Activated CD4-positive, alpha-beta memory T cell treated with anti-CD3 and anti-CD28 coated beads for 36 hours (primary cell): ENCODE measurements at regions of chrX and their contacts with region 1.

Region 1: GRCh38 chrX:72620550-72621145 is 48.0 kb upstream of the HDAC8 start:
- DNase-seq: peak; percentile 72
- H3K4me3 Mint-ChIP-seq: peak overlapping the region; percentile 54
- H3K27ac Mint-ChIP-seq: peak overlapping the region; percentile 91
- H3K4me1 Mint-ChIP-seq: peaks cover 23% of the 10 kb centered on the region
- H3K27me3 Mint-ChIP-seq: peaks cover 8% of the 10 kb centered on the region

Region 2: GRCh38 chrX:72269671-72270251 is 350.9 kb before region 1 on chrX:
- CTCF ChIA-PET with region 1: no interaction called
- POLR2A ChIA-PET with region 1: no interaction called
- intact Hi-C with region 1: loop called (anchors 10 kb)
- DNase-seq: peak; percentile 49
- H3K4me3 Mint-ChIP-seq: no peak overlapping the region
- H3K27ac Mint-ChIP-seq: peak overlapping the region; percentile 83
- H3K4me1 Mint-ChIP-seq: peaks cover 42% of the 10 kb centered on the region
- H3K27me3 Mint-ChIP-seq: no peaks in the 10 kb centered on the region

Region 3: DNA sequence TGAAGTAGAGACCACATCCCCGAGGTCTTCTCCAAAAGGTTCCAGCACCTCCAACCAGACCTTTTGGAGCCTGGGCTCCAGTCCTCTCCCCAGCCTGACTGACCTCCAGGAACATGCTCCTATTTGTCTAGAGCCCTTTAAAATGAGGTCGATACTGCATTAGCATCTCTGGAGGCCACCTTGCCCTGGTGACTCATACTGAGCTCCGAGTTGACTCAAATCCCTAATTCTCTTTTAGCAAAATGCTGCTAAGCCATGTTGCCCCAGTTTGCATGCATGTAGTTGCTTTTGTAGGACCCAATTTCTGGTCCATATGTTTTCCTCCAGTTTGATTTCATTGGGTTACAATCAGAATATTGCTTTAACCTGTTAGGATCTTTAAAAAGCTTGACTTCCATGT is 271.5 kb before region 1 on chrX:
- CTCF ChIA-PET with region 1: no interaction called
- POLR2A ChIA-PET with region 1: no interaction called
- intact Hi-C with region 1: loop called (anchors 2 kb)
- DNase-seq: peak; percentile 56
- H3K4me3 Mint-ChIP-seq: no peak overlapping the region
- H3K27ac Mint-ChIP-seq: peak overlapping the region; percentile 75
- H3K4me1 Mint-ChIP-seq: peaks cover 21% of the 10 kb centered on the region
- H3K27me3 Mint-ChIP-seq: no peaks in the 10 kb centered on the region

Region 4: DNA sequence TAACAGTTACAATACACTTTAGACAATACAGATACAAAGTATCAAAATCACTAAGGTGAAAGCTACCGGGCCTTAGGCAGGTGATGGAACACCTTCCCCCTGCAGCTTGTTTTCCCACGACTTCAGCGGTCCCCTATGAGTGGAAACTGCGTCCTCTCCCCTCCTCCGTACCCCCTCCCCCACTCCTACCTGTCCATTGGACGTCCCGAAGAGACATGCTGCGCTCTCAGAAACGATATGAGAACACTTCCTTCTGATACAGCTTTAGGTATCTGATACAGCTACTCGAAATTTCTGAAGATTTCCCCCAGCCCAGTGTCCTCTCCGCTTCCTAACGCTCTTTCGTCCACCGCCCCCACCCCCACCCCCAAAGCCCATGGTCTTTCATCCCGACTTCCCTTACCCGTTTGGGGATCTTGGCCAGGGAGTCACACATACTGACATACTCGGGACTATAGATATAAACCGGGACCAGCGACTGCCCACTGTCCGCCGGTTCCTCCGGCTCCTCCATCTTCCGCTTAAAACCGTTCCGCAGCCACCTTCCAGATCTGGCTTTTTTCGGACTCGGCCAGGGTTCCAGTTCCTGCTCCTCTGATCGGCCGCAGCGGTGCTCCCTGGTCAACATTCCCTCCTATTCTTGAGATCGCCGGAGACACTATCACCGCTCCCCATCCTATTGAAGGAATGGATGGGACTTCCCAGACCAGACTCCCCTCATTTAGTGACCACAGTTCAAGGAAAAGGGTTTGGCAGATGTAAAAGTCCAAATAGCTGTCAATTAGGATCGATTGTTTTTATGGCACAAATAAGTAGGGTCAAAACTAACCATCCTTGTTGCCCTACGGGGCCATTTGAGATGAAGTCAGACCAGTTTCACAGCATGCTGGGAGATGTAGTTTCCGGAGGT is 48.1 kb before region 1 on chrX and contains the start of gene HDAC8:
- CTCF ChIA-PET with region 1: no interaction called
- POLR2A ChIA-PET with region 1: no interaction called
- intact Hi-C with region 1: loop called (anchors 2 kb)
- DNase-seq: peak; percentile 52
- H3K4me3 Mint-ChIP-seq: peak within 1 kb of the TSS; percentile 89
- H3K27ac Mint-ChIP-seq: peak within 1 kb of the TSS; percentile 84
- H3K4me1 Mint-ChIP-seq: peaks cover 7% of the 10 kb centered on the region
- H3K27me3 Mint-ChIP-seq: no peaks in the 10 kb centered on the region
- total RNA-seq, gene HDAC8: 17.9 to 19.7 TPM

Region 5: DNA sequence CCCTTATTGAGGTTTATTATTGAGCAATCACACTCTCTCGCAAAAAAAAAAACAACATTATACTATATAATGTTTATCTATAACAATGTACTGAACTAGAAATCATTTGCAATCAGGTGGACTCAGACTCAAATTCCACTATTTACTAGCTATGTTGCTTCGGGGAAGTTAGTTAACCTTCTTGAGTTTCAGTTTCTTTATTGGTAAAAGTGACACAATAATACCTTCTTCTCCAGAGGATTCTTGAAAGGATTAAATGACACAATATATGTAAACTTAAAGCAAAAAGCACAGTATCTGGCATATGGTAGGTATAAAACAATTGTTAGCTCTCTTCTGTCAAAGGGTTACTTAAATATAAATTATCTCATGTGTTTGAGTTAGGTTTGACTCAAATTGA is 16.5 kb before region 1 on chrX:
- CTCF ChIA-PET with region 1: interaction called, 7 read pairs
- POLR2A ChIA-PET with region 1: interaction called, 4 read pairs
- intact Hi-C with region 1: loop called (anchors 1 kb)
- DNase-seq: no peak
- H3K4me3 Mint-ChIP-seq: no peak overlapping the region
- H3K27ac Mint-ChIP-seq: no peak overlapping the region
- H3K4me1 Mint-ChIP-seq: peaks cover 13% of the 10 kb centered on the region
- H3K27me3 Mint-ChIP-seq: no peaks in the 10 kb centered on the region

Region 6: DNA sequence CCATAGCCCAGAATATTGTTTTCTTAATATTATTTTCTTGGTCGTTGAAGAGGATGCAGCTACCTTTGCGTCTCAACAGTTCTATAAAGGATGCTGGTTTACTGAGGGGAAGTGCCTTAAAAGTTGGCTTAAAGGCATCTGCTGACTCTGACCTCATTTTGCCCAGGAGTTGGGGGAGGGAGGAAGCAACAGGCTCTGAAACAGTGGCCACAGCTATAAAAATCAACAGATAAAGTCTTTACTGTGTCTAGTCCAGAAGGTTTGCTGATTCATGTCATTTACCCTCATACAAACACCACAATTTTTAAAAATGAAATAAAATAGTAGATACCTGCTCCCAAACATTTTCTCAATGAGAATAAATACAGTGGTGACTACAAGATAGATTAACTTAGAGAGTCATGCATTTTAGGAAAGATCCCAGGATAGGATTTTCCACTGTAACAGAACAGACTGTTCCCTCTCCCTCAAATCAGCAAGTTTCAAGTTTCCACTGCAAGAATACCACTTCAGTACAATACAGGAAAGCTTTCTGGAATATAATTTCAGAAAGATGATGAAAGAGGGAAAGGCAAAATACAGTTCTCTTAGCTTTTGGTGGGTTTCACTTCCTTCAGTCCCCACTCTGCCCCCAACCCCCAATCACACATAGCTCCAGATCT is 91.6 kb after region 1 on chrX:
- CTCF ChIA-PET with region 1: no interaction called
- POLR2A ChIA-PET with region 1: no interaction called
- intact Hi-C with region 1: loop called (anchors 2 kb)
- DNase-seq: no peak
- H3K4me3 Mint-ChIP-seq: no peak overlapping the region
- H3K27ac Mint-ChIP-seq: no peak overlapping the region
- H3K4me1 Mint-ChIP-seq: peaks cover 12% of the 10 kb centered on the region
- H3K27me3 Mint-ChIP-seq: peaks cover 6% of the 10 kb centered on the region